Activated CD8-positive, alpha-beta T cell treated with anti-CD3 and anti-CD28 coated beads for 36 hours (primary cell): ENCODE measurements at regions of chr2 and their contacts with region 1.

Region 1: GRCh38 chr2:74334931-74335333 is 8.3 kb downstream of the SLC4A5 start:
- DNase-seq: peak; percentile 80
- ATAC-seq: peak; percentile 90
- H3K4me3 Mint-ChIP-seq: no peak overlapping the region
- H3K27ac Mint-ChIP-seq: no peak overlapping the region
- H3K4me1 Mint-ChIP-seq: no peaks in the 10 kb centered on the region
- H3K27me3 Mint-ChIP-seq: no peaks in the 10 kb centered on the region
- CTCF ChIP-seq: peak; percentile 96

Region 2: GRCh38 chr2:74238879-74239278 is 96.1 kb before region 1 on chr2:
- CTCF ChIA-PET with region 1: interaction called, 15 read pairs
- POLR2A ChIA-PET with region 1: no interaction called
- intact Hi-C with region 1: no loop called
- DNase-seq: no peak
- ATAC-seq: no peak
- H3K4me3 Mint-ChIP-seq: no peak overlapping the region
- H3K27ac Mint-ChIP-seq: no peak overlapping the region
- H3K4me1 Mint-ChIP-seq: peaks cover 3% of the 10 kb centered on the region
- H3K27me3 Mint-ChIP-seq: no peaks in the 10 kb centered on the region
- CTCF ChIP-seq: no peak

Region 3: GRCh38 chr2:74261204-74261864 is 73.6 kb before region 1 on chr2:
- CTCF ChIA-PET with region 1: interaction called, 114 read pairs
- POLR2A ChIA-PET with region 1: no interaction called
- intact Hi-C with region 1: no loop called
- DNase-seq: no peak
- ATAC-seq: no peak
- H3K4me3 Mint-ChIP-seq: no peak overlapping the region
- H3K27ac Mint-ChIP-seq: no peak overlapping the region
- H3K4me1 Mint-ChIP-seq: peaks cover 4% of the 10 kb centered on the region
- H3K27me3 Mint-ChIP-seq: no peaks in the 10 kb centered on the region
- CTCF ChIP-seq: no peak

Region 4: DNA sequence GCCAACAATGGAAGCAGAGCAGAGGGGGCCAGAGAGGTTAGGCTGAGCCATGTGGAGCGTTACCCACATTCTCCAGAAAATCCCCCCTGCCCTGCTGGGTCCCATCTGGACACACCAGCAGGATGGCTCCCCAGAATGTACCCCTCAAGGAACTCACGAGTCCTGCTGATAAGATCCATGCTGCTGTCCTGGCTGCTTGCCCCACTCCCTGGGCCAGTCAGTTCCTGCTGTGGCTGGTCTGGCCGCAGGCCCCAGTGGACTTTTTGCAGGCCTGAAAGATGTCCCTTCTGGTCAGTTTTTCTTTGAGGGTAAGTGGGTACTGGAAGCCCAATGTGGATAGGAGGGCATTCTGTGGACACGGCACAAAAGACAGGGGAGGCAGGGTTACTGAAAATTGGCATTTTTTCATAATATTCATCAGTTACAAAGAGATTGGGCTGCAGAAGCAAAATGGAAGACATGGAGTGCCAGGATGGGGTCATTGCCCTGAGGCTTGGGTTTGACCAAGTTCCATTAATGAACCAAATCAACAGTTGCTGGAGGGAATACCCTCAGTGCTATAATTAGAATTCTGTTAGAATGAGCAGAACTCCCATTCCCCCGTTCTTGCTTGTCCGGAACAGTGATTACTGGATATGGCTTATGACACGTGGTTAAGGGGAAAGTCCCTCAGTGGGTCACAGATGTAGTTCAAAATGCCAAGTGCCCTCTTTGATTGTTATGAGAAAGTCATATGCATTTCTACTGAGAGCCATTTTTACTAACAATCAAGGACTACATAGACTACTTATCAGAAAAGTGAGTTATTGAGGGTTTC is 30.4 kb before region 1 on chr2:
- CTCF ChIA-PET with region 1: interaction called, 24 read pairs
- POLR2A ChIA-PET with region 1: no interaction called
- intact Hi-C with region 1: no loop called
- DNase-seq: peak; percentile 29
- ATAC-seq: peak; percentile 88
- H3K4me3 Mint-ChIP-seq: no peak overlapping the region
- H3K27ac Mint-ChIP-seq: no peak overlapping the region
- H3K4me1 Mint-ChIP-seq: peaks cover 7% of the 10 kb centered on the region
- H3K27me3 Mint-ChIP-seq: no peaks in the 10 kb centered on the region
- CTCF ChIP-seq: no peak

Region 5: DNA sequence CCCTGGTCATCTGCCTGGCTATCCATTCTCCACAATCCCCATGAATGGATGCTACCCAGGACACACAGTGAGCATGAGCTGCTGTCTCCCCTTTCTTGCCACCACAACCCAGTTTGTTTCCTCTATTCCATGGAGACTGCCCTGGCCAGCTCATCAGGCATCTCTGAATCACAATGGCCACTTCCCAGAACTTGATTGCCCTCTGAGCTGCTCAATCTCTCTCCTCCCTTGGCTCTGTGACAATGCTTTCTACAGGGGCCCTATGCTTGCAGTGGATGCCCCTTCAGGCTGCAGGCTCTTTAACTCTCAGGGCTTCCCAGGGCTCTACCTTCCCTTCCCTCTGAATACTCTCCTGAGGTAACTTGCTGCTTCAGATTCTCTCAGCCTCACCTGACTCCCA is 22.7 kb after region 1 on chr2:
- CTCF ChIA-PET with region 1: interaction called, 16 read pairs
- POLR2A ChIA-PET with region 1: no interaction called
- intact Hi-C with region 1: no loop called
- DNase-seq: no peak
- ATAC-seq: no peak
- H3K4me3 Mint-ChIP-seq: no peak overlapping the region
- H3K27ac Mint-ChIP-seq: no peak overlapping the region
- H3K4me1 Mint-ChIP-seq: no peaks in the 10 kb centered on the region
- H3K27me3 Mint-ChIP-seq: no peaks in the 10 kb centered on the region
- CTCF ChIP-seq: no peak

Region 6: GRCh38 chr2:74379851-74380789 is 45.2 kb after region 1 on chr2 and contains the start of gene DCTN1:
- CTCF ChIA-PET with region 1: interaction called, 10 read pairs
- POLR2A ChIA-PET with region 1: no interaction called
- intact Hi-C with region 1: no loop called
- DNase-seq: peak; percentile 46
- ATAC-seq: peak; percentile 80
- H3K4me3 Mint-ChIP-seq: no peak within 1 kb of the TSS
- H3K27ac Mint-ChIP-seq: peak within 1 kb of the TSS; percentile 40
- H3K4me1 Mint-ChIP-seq: peaks cover 29% of the 10 kb centered on the region
- H3K27me3 Mint-ChIP-seq: no peaks in the 10 kb centered on the region
- CTCF ChIP-seq: no peak
- total RNA-seq, gene DCTN1: 67.3 to 81.4 TPM

Region 7: GRCh38 chr2:74474899-74475298 is 140.0 kb after region 1 on chr2:
- CTCF ChIA-PET with region 1: no interaction called
- POLR2A ChIA-PET with region 1: no interaction called
- intact Hi-C with region 1: no loop called
- DNase-seq: no peak
- ATAC-seq: no peak
- H3K4me3 Mint-ChIP-seq: no peak overlapping the region
- H3K27ac Mint-ChIP-seq: no peak overlapping the region
- H3K4me1 Mint-ChIP-seq: peaks cover 21% of the 10 kb centered on the region
- H3K27me3 Mint-ChIP-seq: no peaks in the 10 kb centered on the region
- CTCF ChIP-seq: peak; percentile 45

Region 8: DNA sequence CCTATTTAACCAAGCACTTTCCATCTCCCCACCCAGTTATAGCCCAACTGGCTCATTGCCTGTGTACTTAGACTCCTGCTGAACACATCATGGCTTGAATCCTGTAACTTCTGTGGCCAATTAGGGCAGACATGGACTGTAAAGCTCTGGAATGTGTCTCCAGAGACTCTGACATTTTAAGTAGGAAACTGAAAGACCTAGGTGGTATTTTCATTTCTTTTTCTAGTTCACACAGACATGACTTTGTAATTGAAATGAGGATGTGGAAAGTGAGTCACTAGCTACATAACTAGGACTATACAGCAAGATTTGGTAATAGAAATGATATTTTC is 231.8 kb after region 1 on chr2:
- CTCF ChIA-PET with region 1: no interaction called
- POLR2A ChIA-PET with region 1: no interaction called
- intact Hi-C with region 1: no loop called
- DNase-seq: no peak
- ATAC-seq: peak; percentile 64
- H3K4me3 Mint-ChIP-seq: peak overlapping the region; percentile 22
- H3K27ac Mint-ChIP-seq: peak overlapping the region; percentile 82
- H3K4me1 Mint-ChIP-seq: peaks cover 30% of the 10 kb centered on the region
- H3K27me3 Mint-ChIP-seq: peaks cover 16% of the 10 kb centered on the region
- CTCF ChIP-seq: no peak